Activated T-helper 2 cell treated with anti-CD3 and anti-CD28 coated beads, Interferon-gamma antibody, Interleukin-2, Interleukin-4, amounts not matched to agents 10 μg/mL and 5 μg/mL and 100 μg/mL, durations not matched to agents 14 hours and 24 hours and 36 hours (primary cell): ENCODE measurements at regions of chr12 and their contacts with region 1.

Region 1: GRCh38 chr12:123075646-123076171 is 75.2 kb downstream of the PITPNM2 start:
- DNase-seq: peak; percentile 81
- H3K4me3 Mint-ChIP-seq: peak overlapping the region; percentile 83
- H3K27ac Mint-ChIP-seq: peak overlapping the region; percentile 99
- H3K4me1 Mint-ChIP-seq: peaks cover 44% of the 10 kb centered on the region
- H3K27me3 Mint-ChIP-seq: no peaks in the 10 kb centered on the region

Region 2: DNA sequence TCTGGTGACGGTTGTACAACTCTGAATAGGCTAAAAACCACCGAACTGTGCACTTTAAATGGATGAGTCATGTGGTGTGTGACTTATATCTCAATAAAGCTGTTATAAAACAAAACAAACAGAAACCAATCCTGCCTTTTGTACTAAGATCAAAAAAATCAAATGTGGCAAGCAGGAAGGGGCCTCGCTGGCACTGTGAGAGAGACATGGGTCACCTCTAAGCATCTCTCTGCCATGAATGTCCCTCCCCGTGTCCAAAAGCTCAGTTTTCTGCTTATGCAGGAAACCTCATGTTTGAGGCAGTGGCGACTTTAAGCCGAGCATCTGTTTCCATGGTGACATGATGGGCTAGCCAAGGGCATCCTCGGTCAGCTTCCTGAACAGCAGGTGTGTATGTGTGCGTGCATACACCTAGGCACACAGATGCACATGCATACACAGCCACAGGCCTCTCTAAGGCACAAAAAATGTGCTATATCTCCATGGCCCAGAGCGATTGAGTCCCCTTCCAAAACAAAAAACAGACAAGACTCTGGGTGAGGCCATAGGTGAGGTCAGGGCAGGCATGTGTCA is 50.8 kb before region 1 on chr12:
- intact Hi-C with region 1: loop called (anchors 5 kb)
- DNase-seq: no peak
- H3K4me3 Mint-ChIP-seq: no peak overlapping the region
- H3K27ac Mint-ChIP-seq: peak overlapping the region; percentile 42
- H3K4me1 Mint-ChIP-seq: peaks cover 20% of the 10 kb centered on the region
- H3K27me3 Mint-ChIP-seq: no peaks in the 10 kb centered on the region

Region 3: DNA sequence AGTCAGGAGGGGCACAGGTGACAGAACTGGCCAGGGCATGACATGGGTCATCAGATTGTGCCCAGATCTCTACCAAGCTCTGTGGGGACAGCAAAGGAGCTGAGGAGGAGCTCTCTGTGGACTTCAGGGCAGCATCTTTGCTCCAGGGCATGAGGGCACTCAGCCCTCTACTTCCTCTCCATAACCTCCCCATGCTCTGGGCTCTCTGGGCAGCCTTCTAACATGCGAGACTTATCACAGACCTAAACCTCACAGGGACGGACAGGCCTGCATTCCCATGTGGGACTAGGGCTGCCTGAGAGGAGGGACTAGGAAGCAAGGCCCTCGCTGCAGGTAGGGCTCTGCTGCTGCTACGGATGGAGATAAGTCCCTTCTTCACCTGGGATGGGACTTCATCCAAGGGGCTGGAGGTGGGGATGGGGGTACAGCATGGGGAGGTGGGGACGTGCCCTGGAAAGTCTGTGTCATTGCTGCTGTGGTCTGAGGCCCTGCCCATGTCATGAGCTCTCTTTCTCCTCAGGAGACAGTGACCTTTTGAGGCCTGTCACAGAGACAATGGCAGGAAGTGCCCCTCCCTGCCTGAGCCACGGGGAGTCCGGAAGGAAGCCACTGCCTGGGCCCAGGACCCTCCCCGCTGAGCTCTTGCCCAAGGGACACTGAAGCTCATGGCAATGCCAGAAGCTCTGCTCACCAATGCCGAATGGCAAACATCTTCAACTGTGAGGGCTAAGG is 31.1 kb after region 1 on chr12:
- intact Hi-C with region 1: loop called (anchors 1 kb)
- DNase-seq: peak; percentile 71
- H3K4me3 Mint-ChIP-seq: peak overlapping the region; percentile 22
- H3K27ac Mint-ChIP-seq: peak overlapping the region; percentile 96
- H3K4me1 Mint-ChIP-seq: peaks cover 41% of the 10 kb centered on the region
- H3K27me3 Mint-ChIP-seq: no peaks in the 10 kb centered on the region

Region 4: GRCh38 chr12:123150744-123151456 is 75.2 kb after region 1 on chr12 and contains the start of gene PITPNM2:
- intact Hi-C with region 1: loop called (anchors 1 kb)
- DNase-seq: peak; percentile 55
- H3K4me3 Mint-ChIP-seq: peak within 1 kb of the TSS; percentile 84
- H3K27ac Mint-ChIP-seq: peak within 1 kb of the TSS; percentile 78
- H3K4me1 Mint-ChIP-seq: peaks cover 20% of the 10 kb centered on the region
- H3K27me3 Mint-ChIP-seq: peaks cover 20% of the 10 kb centered on the region
- total RNA-seq, gene PITPNM2: 15.5 and 16.2 TPM in 2 replicates

Region 5: GRCh38 chr12:123365025-123365917 is 289.6 kb after region 1 on chr12:
- intact Hi-C with region 1: loop called (anchors 1 kb)
- DNase-seq: peak; percentile 97
- H3K4me3 Mint-ChIP-seq: peak overlapping the region; percentile 82
- H3K27ac Mint-ChIP-seq: peak overlapping the region; percentile 93
- H3K4me1 Mint-ChIP-seq: peaks cover 8% of the 10 kb centered on the region
- H3K27me3 Mint-ChIP-seq: no peaks in the 10 kb centered on the region